ENCODE measurements at regions of chr1 and their contacts with region 1.

Region 1: GRCh38 chr1:160244209-160244608 is 18.1 kb downstream of the DCAF8 start:
- DNase-seq: no peak
- H3K4me3 ChIP-seq: no peak overlapping the region
- H3K27ac ChIP-seq: no peak overlapping the region
- H3K4me1 ChIP-seq: no peaks in the 10 kb centered on the region
- H3K27me3 ChIP-seq: no peaks in the 10 kb centered on the region
- CTCF ChIP-seq: no peak

Region 2: DNA sequence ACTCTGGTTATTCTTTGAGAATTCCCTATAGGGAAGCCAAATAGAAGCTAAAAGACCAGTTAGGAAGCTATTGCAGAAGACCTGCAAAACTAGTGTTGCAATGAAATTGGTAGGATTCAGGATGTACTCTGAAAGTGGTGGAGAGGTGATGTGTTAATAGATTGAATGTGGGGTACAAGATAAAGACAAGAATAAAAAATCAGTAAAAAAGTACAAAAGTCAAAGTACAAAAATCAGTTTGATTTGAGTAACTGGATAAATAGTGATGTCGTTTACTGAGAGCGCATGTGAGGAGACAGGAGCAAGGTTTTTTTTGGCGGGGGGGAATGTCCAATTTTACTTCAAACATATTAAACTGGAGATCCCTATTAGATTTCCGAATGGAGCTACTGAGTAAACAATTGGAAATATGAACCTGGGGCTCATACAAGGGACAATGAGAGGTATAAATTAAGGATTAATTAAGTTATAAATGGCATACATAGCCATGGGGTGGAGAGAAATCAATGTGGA is 20.6 kb after region 1 on chr1:
- CTCF ChIA-PET with region 1: no interaction called
- POLR2A ChIA-PET with region 1: no interaction called
- intact Hi-C with region 1: no loop called
- DNase-seq: no peak
- H3K4me3 ChIP-seq: no peak overlapping the region
- H3K27ac ChIP-seq: no peak overlapping the region
- H3K4me1 ChIP-seq: peaks cover 23% of the 10 kb centered on the region
- H3K27me3 ChIP-seq: no peaks in the 10 kb centered on the region
- CTCF ChIP-seq: no peak

Region 3: GRCh38 chr1:160277330-160277729 is 33.1 kb after region 1 on chr1:
- CTCF ChIA-PET with region 1: no interaction called
- POLR2A ChIA-PET with region 1: interaction called, 10 read pairs
- intact Hi-C with region 1: no loop called
- DNase-seq: no peak
- H3K4me3 ChIP-seq: no peak overlapping the region
- H3K27ac ChIP-seq: no peak overlapping the region
- H3K4me1 ChIP-seq: no peaks in the 10 kb centered on the region
- H3K27me3 ChIP-seq: no peaks in the 10 kb centered on the region
- CTCF ChIP-seq: no peak

Measured in PC-9 (cell line).